Stomach (tissue), 19 donors: ENCODE measurements at regions of chrX and their contacts with region 1.

Region 1: GRCh38 chrX:115330498-115331168 is 41.1 kb downstream of the LUZP4 start:
- DNase-seq: peak in 1 of 2 donors; percentile 89
- H3K4me3 ChIP-seq: peak overlapping the region in 2 of 4 donors; percentile 15 to 16
- H3K27ac ChIP-seq: no peak overlapping the region
- H3K4me1 ChIP-seq: peaks cover 0 to 8% (median 0%) of the 10 kb centered on the region in 4 donors
- H3K27me3 ChIP-seq: peaks cover 0 to 9% (median 0%) of the 10 kb centered on the region in 3 donors
- CTCF ChIP-seq: peak in 5 of 7 experiments; percentile 30 to 86 (median 83)
- EP300 ChIP-seq: no peak
- POLR2A ChIP-seq: no peak

Region 2: GRCh38 chrX:114390251-114390796 is 940.3 kb before region 1 on chrX:
- intact Hi-C with region 1: no loop called
- DNase-seq: no peak
- H3K4me3 ChIP-seq: no peak overlapping the region
- H3K27ac ChIP-seq: no peak overlapping the region
- H3K4me1 ChIP-seq: no peaks in the 10 kb centered on the region
- H3K27me3 ChIP-seq: no peaks in the 10 kb centered on the region
- CTCF ChIP-seq: no peak
- EP300 ChIP-seq: no peak
- POLR2A ChIP-seq: no peak

Region 3: GRCh38 chrX:115642895-115643530 is 312.4 kb after region 1 on chrX:
- intact Hi-C with region 1: loop called (anchors 5 kb)
- DNase-seq: peak; percentile 36 to 85
- H3K4me3 ChIP-seq: no peak overlapping the region
- H3K27ac ChIP-seq: peak overlapping the region in 3 of 5 donors; percentile 7 to 42 (median 25)
- H3K4me1 ChIP-seq: peaks cover 0 to 7% (median 0%) of the 10 kb centered on the region in 4 donors
- H3K27me3 ChIP-seq: peaks cover 0 to 4% (median 0%) of the 10 kb centered on the region in 3 donors
- CTCF ChIP-seq: peak in 6 of 7 experiments; percentile 28 to 98 (median 88)
- EP300 ChIP-seq: no peak
- POLR2A ChIP-seq: no peak